Calu3 (cell line): ENCODE measurements at regions of chr17 and their contacts with region 1.

Region 1: DNA sequence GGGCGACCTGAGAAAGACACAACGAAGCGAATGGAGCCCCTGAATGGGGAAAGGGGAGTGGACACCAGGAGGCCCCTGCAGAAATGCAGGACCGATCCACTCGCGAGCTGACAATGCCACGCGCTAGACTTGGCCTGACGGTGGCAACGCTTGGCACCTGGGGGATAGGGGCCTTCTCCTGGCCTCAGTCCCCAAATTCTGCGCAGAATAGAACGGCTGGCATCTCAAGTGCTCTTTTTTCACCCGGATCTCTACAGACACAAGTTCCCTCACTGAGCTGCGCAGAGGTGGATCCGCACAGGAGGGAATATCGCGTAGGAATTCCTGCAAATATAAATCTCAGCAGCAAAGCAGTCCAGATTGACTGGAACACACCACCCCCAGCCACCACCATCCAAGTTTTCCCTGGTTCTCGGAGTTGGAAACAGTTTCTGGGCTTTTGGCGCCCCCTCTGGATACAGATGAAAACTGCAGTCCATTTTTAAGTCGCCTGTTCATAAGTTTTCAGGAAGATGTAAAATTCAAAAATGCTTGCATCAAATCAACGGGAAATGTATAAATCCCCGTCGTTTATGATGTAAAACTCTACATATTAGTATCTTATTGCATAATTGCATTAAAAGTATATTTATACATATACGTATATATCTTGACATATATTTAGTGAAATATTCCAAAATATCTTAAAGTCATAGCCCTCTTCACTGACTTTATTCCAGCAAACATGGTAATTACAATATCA is 2.3 kb upstream of the SOX9 start:
- DNase-seq: peak; percentile 84
- H3K4me3 Mint-ChIP-seq: peak overlapping the region; percentile 90
- H3K27ac Mint-ChIP-seq: peak overlapping the region; percentile 97
- H3K4me1 Mint-ChIP-seq: peaks cover 15% of the 10 kb centered on the region
- H3K27me3 Mint-ChIP-seq: peaks cover 46% of the 10 kb centered on the region
- CTCF ChIP-seq: peak; percentile 92

Region 2: DNA sequence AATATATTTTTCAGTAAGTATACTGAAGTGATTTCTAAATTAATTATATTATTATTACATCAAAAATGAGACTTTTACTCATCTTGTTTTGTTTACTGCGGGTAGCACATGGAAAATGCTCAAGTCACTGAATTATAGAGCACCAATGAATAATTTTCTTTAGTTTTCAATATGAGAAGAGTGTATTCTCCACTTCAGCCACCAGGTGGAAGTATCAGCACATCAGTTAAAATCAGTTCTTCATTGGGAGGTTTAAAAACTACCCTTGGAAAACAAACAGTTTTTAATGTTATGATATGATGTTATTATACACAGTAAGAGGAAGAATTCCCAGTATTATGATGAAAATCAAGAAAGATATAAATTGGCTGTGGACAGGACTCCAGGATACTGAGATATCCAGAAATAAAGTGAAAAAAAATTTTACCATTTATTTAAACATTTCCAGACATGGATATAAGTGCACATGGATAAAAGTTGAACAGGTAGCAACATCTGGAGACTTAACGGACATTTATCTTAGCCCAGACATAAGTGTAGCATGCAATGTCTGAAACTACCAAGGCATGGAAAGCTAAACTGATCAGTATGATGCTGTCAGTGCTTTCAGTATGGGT is 1481.9 kb before region 1 on chr17:
- CTCF ChIA-PET with region 1: no interaction called
- intact Hi-C with region 1: loop called (anchors 5 kb)
- DNase-seq: peak; percentile 25
- H3K4me3 Mint-ChIP-seq: no peak overlapping the region
- H3K27ac Mint-ChIP-seq: no peak overlapping the region
- H3K4me1 Mint-ChIP-seq: no peaks in the 10 kb centered on the region
- H3K27me3 Mint-ChIP-seq: peaks cover 20% of the 10 kb centered on the region
- CTCF ChIP-seq: peak; percentile 59

Region 3: GRCh38 chr17:71118039-71118438 is 1000.5 kb before region 1 on chr17:
- CTCF ChIA-PET with region 1: no interaction called
- intact Hi-C with region 1: loop called (anchors 2 kb)
- DNase-seq: peak; percentile 52
- H3K4me3 Mint-ChIP-seq: no peak overlapping the region
- H3K27ac Mint-ChIP-seq: no peak overlapping the region
- H3K4me1 Mint-ChIP-seq: peaks cover 9% of the 10 kb centered on the region
- H3K27me3 Mint-ChIP-seq: no peaks in the 10 kb centered on the region
- CTCF ChIP-seq: no peak

Region 4: DNA sequence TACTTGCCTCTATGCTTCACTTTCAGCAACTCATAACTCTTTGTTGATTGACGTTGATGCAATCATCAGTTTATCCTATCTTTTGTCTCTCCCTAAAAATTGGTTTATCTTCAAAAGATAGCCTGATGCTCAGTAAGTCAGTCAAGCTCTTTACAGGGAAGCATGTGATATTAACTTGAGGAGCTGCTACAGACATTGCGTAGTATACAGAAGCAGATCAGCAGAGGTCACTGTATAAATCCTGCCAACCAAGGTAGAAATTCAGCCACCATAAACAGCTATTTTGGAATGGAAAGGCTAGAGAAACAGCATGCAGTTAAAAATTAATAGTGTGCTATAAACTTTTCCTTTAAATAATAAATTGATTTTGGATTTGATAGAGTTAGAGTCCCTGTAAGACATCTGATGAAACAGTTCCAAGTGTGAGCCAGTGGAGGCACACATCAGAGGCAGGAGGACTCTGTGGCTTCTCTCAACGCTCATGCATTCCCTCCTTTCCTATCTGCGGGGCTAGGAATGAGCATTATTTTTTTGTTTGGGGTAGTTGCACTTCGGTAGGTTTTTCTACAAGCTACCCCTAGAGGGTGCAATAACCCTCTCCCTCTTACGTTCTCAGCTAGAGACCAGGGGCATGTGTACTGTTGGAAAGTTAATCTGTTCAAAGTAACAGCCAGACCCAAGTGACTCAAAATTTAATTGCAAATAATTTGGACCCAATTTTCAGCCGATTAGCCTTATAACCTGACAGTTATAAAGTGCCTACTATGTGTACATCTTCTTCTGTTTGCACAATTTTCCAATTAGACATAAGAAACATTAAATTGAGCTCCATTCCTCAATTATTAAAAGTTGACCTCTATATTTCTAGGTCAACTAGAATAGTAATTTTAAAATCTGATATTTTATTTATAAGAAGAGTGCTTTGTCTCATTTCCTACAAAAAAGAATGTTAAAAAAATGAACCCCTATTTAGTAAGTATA is 645.4 kb before region 1 on chr17:
- CTCF ChIA-PET with region 1: interaction called, 5 read pairs
- intact Hi-C with region 1: loop called (anchors 1 kb)
- DNase-seq: peak; percentile 57
- H3K4me3 Mint-ChIP-seq: no peak overlapping the region
- H3K27ac Mint-ChIP-seq: no peak overlapping the region
- H3K4me1 Mint-ChIP-seq: peaks cover 27% of the 10 kb centered on the region
- H3K27me3 Mint-ChIP-seq: no peaks in the 10 kb centered on the region
- CTCF ChIP-seq: peak; percentile 68

Region 5: GRCh38 chr17:71764505-71764904 is 354.0 kb before region 1 on chr17:
- CTCF ChIA-PET with region 1: interaction called, 7 read pairs
- intact Hi-C with region 1: loop called (anchors 5 kb)
- DNase-seq: peak; percentile 43
- H3K4me3 Mint-ChIP-seq: no peak overlapping the region
- H3K27ac Mint-ChIP-seq: no peak overlapping the region
- H3K4me1 Mint-ChIP-seq: peaks cover 9% of the 10 kb centered on the region
- H3K27me3 Mint-ChIP-seq: no peaks in the 10 kb centered on the region
- CTCF ChIP-seq: peak; percentile 52

Region 6: DNA sequence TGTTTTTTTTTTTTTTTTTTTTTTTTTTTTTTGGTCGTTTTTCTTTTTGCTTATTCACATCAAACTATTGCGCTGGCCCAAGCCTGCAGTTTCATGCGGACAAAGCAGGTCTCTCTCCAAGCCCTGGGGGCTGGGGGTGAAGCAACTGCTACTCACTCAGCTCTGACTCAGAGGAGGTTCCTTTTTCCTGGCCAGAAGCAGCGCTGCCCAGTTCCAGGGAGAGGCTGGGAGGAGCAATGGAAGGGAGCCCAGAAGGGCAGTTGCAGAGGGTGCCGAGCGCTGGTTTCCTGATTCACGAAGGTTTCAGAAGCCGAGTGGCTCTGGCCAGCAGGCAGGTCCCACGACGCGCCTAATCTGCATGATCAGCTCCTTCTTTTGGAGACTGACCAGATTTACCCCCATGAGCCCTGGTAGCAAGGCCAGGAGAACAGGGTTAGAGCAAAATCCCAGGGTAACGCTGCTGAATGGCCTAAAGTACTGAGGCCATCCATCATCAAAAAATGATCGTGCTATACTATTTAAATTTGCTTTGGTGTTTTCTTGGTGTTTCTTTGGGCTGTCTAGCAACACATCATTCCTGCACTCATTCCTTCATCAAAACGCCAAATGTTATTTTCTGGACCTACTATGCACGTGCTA is 142.4 kb before region 1 on chr17:
- CTCF ChIA-PET with region 1: no interaction called
- intact Hi-C with region 1: loop called (anchors 10 kb)
- DNase-seq: peak; percentile 78
- H3K4me3 Mint-ChIP-seq: peak overlapping the region; percentile 27
- H3K27ac Mint-ChIP-seq: peak overlapping the region; percentile 13
- H3K4me1 Mint-ChIP-seq: peaks cover 10% of the 10 kb centered on the region
- H3K27me3 Mint-ChIP-seq: no peaks in the 10 kb centered on the region
- CTCF ChIP-seq: no peak